Mammary epithelial cell (primary cell): ENCODE measurements at regions of chr2 and their contacts with region 1.

Region 1: GRCh38 chr2:207746131-207746530 is 23.6 kb downstream of the FZD5 start:
- DNase-seq: peak; percentile 37
- H3K4me3 ChIP-seq: no peak overlapping the region
- H3K27ac ChIP-seq: no peak overlapping the region
- H3K4me1 ChIP-seq: no peaks in the 10 kb centered on the region
- H3K27me3 ChIP-seq: no peaks in the 10 kb centered on the region
- CTCF ChIP-seq: peak; percentile 86 to 93

Region 2: DNA sequence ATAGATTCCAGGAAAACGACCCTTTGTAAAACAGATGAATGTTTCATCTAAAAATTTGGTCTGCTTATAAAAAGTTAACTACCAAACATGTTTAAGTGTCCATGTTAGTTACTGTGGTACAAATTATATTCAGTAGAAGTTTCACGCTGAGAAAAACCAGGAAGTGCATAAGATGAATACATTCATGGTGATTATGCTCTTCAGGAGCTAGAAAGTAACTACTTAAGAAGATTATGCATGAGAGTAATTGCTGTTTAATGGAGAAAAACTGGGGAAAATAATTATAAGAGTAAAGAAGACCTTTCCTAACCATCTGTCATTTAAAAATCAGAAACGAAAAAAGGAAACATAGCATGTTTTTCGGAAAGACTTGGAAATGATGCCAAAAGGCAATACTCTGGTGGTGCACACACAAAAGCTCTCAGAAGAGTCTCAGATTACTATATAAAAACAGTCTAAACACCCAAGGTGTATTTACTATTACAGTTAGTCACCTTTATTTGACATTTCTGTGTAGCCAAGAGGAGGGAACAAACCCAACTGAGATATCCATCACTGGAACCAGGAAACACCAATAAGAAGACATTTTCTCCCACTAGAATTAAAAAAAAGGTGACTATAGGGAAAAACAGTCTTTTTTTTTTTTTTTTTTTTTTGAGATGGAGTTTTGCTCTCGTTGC is 82.1 kb before region 1 on chr2:
- CTCF ChIA-PET with region 1: no interaction called
- dilution Hi-C with region 1: no loop called
- in situ Hi-C with region 1: no loop called
- intact Hi-C with region 1: no loop called
- DNase-seq: no peak
- H3K4me3 ChIP-seq: no peak overlapping the region
- H3K27ac ChIP-seq: no peak overlapping the region
- H3K4me1 ChIP-seq: no peaks in the 10 kb centered on the region
- H3K27me3 ChIP-seq: no peaks in the 10 kb centered on the region
- CTCF ChIP-seq: no peak

Region 3: DNA sequence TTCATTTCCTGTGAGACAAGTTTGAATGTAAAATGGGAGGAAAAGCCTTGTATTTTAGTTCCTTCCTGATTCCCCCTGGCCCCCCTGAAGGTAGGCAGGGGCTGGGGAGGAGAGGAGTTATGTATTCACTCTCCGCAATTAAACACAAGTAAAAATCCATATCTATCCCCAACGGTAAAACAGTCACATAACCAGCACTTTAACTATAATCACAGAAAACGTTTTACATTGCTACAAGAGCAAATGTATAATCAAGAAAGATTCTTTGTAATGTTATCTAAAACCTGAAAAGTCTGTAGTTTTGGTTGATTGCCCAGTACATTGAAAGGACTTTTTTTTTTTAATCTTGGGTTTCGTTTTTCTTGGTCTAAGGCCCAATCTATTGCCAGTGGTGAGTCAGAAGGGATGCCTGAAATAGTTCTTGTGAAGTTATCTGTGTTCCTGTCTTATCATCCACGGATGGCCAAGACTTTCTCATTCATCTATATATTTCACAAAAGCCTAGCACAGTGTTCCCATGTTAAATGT is 69.2 kb before region 1 on chr2:
- CTCF ChIA-PET with region 1: no interaction called
- dilution Hi-C with region 1: no loop called
- in situ Hi-C with region 1: no loop called
- intact Hi-C with region 1: no loop called
- DNase-seq: peak; percentile 59
- H3K4me3 ChIP-seq: no peak overlapping the region
- H3K27ac ChIP-seq: no peak overlapping the region
- H3K4me1 ChIP-seq: peaks cover 7% of the 10 kb centered on the region
- H3K27me3 ChIP-seq: no peaks in the 10 kb centered on the region
- CTCF ChIP-seq: no peak

Region 4: GRCh38 chr2:207724113-207724512 is 22.0 kb before region 1 on chr2:
- CTCF ChIA-PET with region 1: no interaction called
- dilution Hi-C with region 1: no loop called
- in situ Hi-C with region 1: no loop called
- intact Hi-C with region 1: no loop called
- DNase-seq: no peak
- H3K4me3 ChIP-seq: no peak overlapping the region
- H3K27ac ChIP-seq: no peak overlapping the region
- H3K4me1 ChIP-seq: peaks cover 28% of the 10 kb centered on the region
- H3K27me3 ChIP-seq: no peaks in the 10 kb centered on the region
- CTCF ChIP-seq: no peak

Region 5: DNA sequence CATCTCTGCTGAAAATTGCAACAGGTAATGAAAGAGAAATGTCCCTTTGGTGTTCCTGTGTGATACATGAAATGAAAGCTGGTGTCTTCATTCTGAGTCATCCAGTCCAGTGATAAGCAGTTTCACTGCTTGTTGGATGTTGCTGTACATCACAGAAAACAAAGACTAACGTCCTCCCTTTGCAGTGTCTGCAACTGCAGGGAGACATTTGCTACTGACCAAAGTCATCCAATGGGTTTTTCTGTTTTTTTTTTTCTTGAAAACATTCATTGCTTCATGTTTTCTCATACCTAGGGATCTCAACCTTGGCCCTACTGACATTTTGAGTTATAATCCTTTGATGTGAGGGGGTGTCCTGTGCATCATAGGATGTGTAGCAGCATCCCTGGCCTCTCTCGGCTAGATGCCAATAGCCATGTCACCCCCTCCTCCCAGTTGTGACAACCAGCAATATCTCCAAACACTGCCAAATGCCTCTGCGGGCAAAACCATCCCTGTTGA is 87.2 kb after region 1 on chr2:
- CTCF ChIA-PET with region 1: no interaction called
- dilution Hi-C with region 1: no loop called
- in situ Hi-C with region 1: no loop called
- intact Hi-C with region 1: no loop called
- DNase-seq: peak; percentile 35
- H3K4me3 ChIP-seq: no peak overlapping the region
- H3K27ac ChIP-seq: no peak overlapping the region
- H3K4me1 ChIP-seq: peaks cover 8% of the 10 kb centered on the region
- H3K27me3 ChIP-seq: no peaks in the 10 kb centered on the region
- CTCF ChIP-seq: no peak

Region 6: DNA sequence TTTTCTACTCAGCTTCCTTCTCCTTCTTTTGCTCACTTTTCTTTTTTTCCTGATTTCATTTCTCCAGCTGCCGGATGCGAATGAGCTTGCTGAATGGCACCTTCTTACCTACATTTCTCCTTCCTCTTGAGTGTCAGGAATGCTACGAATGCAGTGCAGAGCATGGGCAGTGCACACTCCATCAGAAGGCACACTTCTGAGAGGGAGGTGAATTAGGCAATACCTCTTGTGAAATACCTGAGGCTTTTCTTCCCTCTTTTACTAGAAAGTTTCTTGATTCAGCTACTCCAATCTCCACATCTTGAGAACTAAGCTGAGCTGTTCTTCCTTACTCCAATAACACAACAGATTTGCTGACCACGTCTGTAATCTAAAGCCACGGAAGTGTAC is 228.1 kb after region 1 on chr2:
- CTCF ChIA-PET with region 1: interaction called, 4 read pairs
- dilution Hi-C with region 1: no loop called
- in situ Hi-C with region 1: loop called (anchors 10 to 25 kb)
- intact Hi-C with region 1: loop called (anchors 1 kb)
- DNase-seq: peak; percentile 16
- H3K4me3 ChIP-seq: no peak overlapping the region
- H3K27ac ChIP-seq: no peak overlapping the region
- H3K4me1 ChIP-seq: no peaks in the 10 kb centered on the region
- H3K27me3 ChIP-seq: no peaks in the 10 kb centered on the region
- CTCF ChIP-seq: no peak

Region 7: DNA sequence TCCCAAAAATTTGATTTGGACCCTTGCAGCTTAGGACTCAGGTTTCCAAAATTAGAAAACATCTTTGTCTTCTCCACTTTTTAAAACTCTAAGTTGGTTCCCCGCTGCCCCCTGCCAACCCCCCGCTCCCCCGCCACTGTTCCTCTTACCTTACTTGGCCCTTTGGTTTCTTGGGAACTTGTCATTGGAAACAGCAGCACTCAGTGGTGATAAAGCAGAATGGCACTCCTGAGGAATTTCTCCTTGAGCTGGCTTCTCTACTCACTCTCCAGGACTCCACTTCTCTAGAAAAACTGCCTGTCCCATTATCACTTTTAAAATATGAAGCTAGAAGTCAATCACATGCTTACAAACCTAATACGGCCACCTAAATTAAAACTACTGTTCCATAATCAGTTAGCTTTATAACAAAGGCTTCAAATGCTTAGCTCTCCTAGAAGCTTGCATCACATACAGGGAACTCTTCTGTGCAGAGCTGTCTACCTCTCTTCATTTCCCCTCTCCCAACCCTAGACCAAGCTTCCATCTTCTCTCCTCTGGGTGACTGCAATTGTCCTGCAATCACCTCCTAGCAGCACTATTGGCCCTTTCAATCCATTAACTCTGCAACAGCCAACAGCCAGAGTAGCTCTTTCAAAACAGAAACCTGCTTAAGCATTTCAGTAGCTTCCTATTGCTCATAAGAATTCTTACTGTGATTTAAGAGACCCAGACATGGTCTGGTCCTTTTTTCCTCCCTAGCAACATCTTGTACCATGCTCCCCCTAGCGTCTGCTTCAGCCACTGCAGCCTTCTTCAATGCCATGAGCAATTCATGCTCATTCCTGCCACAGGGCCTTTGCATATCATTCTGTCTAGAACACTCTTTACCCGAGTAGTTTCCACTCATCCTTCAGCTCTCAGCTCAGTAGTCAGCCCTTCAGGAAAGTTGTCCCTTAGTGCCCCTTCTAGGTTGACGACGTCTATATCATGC is 294.4 kb after region 1 on chr2:
- CTCF ChIA-PET with region 1: interaction called, 3 read pairs
- dilution Hi-C with region 1: no loop called
- in situ Hi-C with region 1: loop called in 1 of 2 experiments (anchors 10 kb)
- intact Hi-C with region 1: loop called (anchors 1 kb)
- DNase-seq: peak; percentile 50
- H3K4me3 ChIP-seq: no peak overlapping the region
- H3K27ac ChIP-seq: no peak overlapping the region
- H3K4me1 ChIP-seq: no peaks in the 10 kb centered on the region
- H3K27me3 ChIP-seq: no peaks in the 10 kb centered on the region
- CTCF ChIP-seq: peak; percentile 73 to 93

Region 8: DNA sequence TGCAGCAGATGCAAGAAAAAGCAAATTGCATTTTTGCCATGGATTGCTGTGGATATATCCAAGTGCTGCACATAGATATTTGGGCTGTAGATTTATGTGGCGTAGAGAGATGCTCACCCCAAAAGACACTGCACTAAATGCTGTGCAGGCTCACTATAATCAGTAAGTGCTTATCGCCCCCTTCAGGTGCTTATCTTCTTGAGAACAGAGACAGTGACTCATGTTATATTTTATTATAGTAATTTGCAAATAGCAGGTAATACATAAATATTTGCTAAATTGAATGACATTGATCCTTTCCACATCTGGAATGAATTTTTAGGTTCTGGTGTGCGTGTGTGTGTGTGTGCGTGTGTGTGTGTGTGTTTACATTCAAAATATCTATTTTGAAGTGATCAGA is 316.0 kb after region 1 on chr2:
- CTCF ChIA-PET with region 1: no interaction called
- dilution Hi-C with region 1: loop called (anchors 25 kb)
- in situ Hi-C with region 1: loop called in 1 of 2 experiments (anchors 10 kb)
- intact Hi-C with region 1: no loop called
- DNase-seq: peak; percentile 33
- H3K4me3 ChIP-seq: no peak overlapping the region
- H3K27ac ChIP-seq: no peak overlapping the region
- H3K4me1 ChIP-seq: peaks cover 10% of the 10 kb centered on the region
- H3K27me3 ChIP-seq: no peaks in the 10 kb centered on the region
- CTCF ChIP-seq: peak; percentile 55 to 56

Region 9: GRCh38 chr2:208072250-208072892 is 326.2 kb after region 1 on chr2:
- CTCF ChIA-PET with region 1: no interaction called
- dilution Hi-C with region 1: loop called (anchors 25 kb)
- in situ Hi-C with region 1: loop called in 1 of 2 experiments (anchors 10 kb)
- intact Hi-C with region 1: loop called (anchors 1 kb)
- DNase-seq: peak; percentile 43
- H3K4me3 ChIP-seq: no peak overlapping the region
- H3K27ac ChIP-seq: no peak overlapping the region
- H3K4me1 ChIP-seq: no peaks in the 10 kb centered on the region
- H3K27me3 ChIP-seq: no peaks in the 10 kb centered on the region
- CTCF ChIP-seq: peak; percentile 70 to 87